ENCODE measurements at regions of chr9 and their contacts with region 1.

Region 1: DNA sequence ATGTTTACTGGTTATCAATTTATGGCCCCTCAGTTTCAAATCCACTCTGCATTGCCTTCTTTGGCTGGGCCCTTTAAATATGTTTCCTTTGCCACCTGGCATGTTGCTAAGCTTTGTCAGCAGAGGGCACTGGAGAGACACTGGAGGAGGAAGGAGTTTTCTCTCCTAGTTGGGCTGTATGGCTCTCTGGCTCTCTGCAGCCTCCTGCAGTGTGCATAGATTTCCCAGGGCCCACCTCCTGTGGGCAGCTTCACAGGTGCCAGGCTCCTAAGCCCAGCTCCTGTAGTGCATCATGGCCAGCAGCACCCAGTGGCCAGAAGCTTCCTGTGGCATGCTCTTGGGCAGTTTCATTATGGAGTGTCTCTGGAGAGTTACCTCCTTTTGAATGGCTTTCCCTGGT is 23.3 kb downstream of the CAVIN4 start:
- DNase-seq: peak in 1 of 2 experiments; percentile 73
- H3K4me3 ChIP-seq: no peak overlapping the region; a peak in 1 of 8 replicates
- H3K27ac ChIP-seq: no peak overlapping the region
- H3K4me1 ChIP-seq: peaks cover 3 to 14% (median 9%) of the 10 kb centered on the region in 4 experiments; a peak in 5 of 7 replicates
- H3K27me3 ChIP-seq: no peaks in the 10 kb centered on the region
- CTCF ChIP-seq: peak; percentile 56 to 88 (median 86)
- EP300 ChIP-seq: no peak
- POLR2A ChIP-seq: no peak
- RAD21 ChIP-seq: peak; percentile 80 to 88

Region 2: DNA sequence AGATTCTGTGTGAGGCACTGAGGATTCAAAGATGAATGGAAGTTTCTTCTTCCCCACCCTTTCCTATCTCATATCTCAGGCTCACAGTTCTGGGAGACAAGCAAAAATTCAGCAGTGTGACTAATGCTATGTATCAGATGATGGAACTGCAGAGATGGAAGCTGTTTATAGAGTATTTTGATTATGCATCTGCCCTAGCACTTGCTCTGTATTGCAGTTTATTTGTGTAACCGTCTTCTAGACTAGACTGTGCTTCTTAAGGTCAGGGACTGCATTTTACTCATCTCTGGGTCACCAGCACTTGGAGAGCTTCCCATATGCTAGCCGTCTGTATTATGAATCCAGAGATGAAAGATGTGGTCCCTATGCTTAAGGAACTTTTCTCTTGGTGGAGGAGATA is 10.7 kb before region 1 on chr9:
- CTCF ChIA-PET with region 1: interaction called, 14 read pairs
- POLR2A ChIA-PET with region 1: interaction called, 7 read pairs
- DNase-seq: no peak
- H3K4me3 ChIP-seq: no peak overlapping the region
- H3K27ac ChIP-seq: no peak overlapping the region
- H3K4me1 ChIP-seq: peaks cover 0 to 3% (median 2%) of the 10 kb centered on the region in 4 experiments; a peak in 1 of 7 replicates
- H3K27me3 ChIP-seq: no peaks in the 10 kb centered on the region
- CTCF ChIP-seq: no peak
- EP300 ChIP-seq: no peak
- POLR2A ChIP-seq: peak in 1 of 2 experiments; percentile 3; a peak in 2 of 3 replicates
- RAD21 ChIP-seq: no peak

Region 3: GRCh38 chr9:100637787-100638186 is 36.6 kb after region 1 on chr9:
- CTCF ChIA-PET with region 1: interaction called, 49 read pairs
- POLR2A ChIA-PET with region 1: interaction called, 4 read pairs
- DNase-seq: peak; percentile 50 to 67
- H3K4me3 ChIP-seq: peak overlapping the region in 1 of 4 experiments; percentile 22; a peak in 1 of 8 replicates
- H3K27ac ChIP-seq: peak overlapping the region; percentile 58; the same call in 1 of the 2 replicates
- H3K4me1 ChIP-seq: peaks cover 3 to 18% (median 8%) of the 10 kb centered on the region in 4 experiments
- H3K27me3 ChIP-seq: no peaks in the 10 kb centered on the region
- CTCF ChIP-seq: peak; percentile 15 to 58 (median 17); a peak in 3 of 4 replicates
- EP300 ChIP-seq: no peak
- POLR2A ChIP-seq: no peak
- RAD21 ChIP-seq: peak; percentile 18 to 33; a peak in 3 of 4 replicates

Region 4: DNA sequence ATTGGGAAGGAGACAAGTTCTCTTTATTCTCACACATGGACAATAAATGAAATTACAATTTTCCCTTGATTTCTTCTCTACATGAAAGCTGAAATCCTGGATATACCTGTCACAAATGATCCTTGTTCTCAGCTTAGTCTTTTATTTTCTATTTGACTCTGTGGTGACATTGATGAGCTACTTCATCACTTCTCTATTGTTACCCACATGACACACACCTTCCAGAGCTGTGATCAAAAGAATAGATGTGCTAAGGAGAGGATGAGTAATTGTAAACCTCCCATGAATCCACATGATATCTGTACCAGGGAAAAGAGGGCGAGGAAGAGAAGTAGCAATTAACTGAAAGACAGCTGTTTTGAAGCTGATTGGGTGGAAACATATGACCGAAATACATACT is 78.6 kb after region 1 on chr9:
- CTCF ChIA-PET with region 1: interaction called, 18 read pairs
- POLR2A ChIA-PET with region 1: no interaction called
- DNase-seq: no peak
- H3K4me3 ChIP-seq: no peak overlapping the region
- H3K27ac ChIP-seq: no peak overlapping the region
- H3K4me1 ChIP-seq: no peaks in the 10 kb centered on the region
- H3K27me3 ChIP-seq: no peaks in the 10 kb centered on the region
- CTCF ChIP-seq: no peak
- EP300 ChIP-seq: no peak
- POLR2A ChIP-seq: no peak
- RAD21 ChIP-seq: no peak

Region 5: DNA sequence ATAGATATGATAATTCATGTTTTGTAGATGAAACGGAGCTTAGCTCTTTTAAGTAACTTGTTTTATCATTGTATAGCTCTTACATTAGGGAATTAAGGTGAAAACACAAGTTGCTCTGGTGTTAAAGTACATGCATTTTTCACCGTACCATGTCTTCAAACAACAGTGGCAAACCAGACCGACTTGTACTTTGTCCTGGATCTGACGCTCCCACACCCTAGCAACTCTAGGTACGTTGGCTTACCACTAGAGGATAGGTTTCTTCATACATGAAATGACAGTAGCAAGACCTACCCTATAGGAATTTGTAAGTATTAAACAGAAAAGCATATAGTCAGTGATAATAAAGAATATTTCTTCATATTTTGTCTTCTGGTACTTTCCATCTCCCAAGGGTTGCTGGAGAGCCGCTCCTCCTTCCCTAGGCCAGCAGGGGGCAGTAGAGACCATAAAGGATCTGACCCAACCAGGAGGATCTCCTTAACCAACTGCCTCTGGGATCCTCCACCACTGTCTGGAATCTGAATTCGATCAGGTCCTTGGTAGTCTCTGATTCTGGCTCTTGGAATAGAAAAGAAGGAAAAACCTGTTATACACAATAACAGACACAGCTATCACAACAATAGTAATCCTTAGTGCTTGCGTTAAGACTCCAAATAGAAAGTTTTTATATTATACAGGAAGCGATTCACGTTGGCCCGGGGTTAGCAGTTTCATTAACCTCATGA is 113.3 kb after region 1 on chr9:
- CTCF ChIA-PET with region 1: interaction called, 35 read pairs
- POLR2A ChIA-PET with region 1: no interaction called
- DNase-seq: peak; percentile 17 to 88
- H3K4me3 ChIP-seq: no peak overlapping the region
- H3K27ac ChIP-seq: no peak overlapping the region
- H3K4me1 ChIP-seq: no peaks in the 10 kb centered on the region
- H3K27me3 ChIP-seq: no peaks in the 10 kb centered on the region
- CTCF ChIP-seq: peak; percentile 76 to 85 (median 83)
- EP300 ChIP-seq: no peak
- POLR2A ChIP-seq: no peak
- RAD21 ChIP-seq: peak; percentile 95 to 97

Region 6: GRCh38 chr9:101311758-101312420 is 710.7 kb after region 1 on chr9:
- CTCF ChIA-PET with region 1: interaction called, 49 read pairs
- POLR2A ChIA-PET with region 1: no interaction called
- DNase-seq: no peak
- H3K4me3 ChIP-seq: no peak overlapping the region
- H3K27ac ChIP-seq: no peak overlapping the region
- H3K4me1 ChIP-seq: no peaks in the 10 kb centered on the region
- H3K27me3 ChIP-seq: no peaks in the 10 kb centered on the region
- CTCF ChIP-seq: peak in 2 of 3 experiments; percentile 53 to 65; a peak in 2 of 4 replicates
- EP300 ChIP-seq: no peak
- POLR2A ChIP-seq: no peak
- RAD21 ChIP-seq: peak; percentile 80 to 83

Measured in H1 (cell line).